H1 (cell line): ENCODE measurements at regions of chr9 and their contacts with region 1.

Region 1: GRCh38 chr9:97900738-97901565 is 21.3 kb downstream of the TRMO start:
- DNase-seq: no peak
- H3K4me3 ChIP-seq: no peak overlapping the region
- H3K27ac ChIP-seq: no peak overlapping the region
- H3K4me1 ChIP-seq: no peaks in the 10 kb centered on the region
- H3K27me3 ChIP-seq: no peaks in the 10 kb centered on the region
- CTCF ChIP-seq: peak in 2 of 3 experiments; percentile 64 to 79; a peak in 3 of 4 replicates
- EP300 ChIP-seq: no peak
- POLR2A ChIP-seq: no peak
- RAD21 ChIP-seq: peak; percentile 67 to 75

Region 2: DNA sequence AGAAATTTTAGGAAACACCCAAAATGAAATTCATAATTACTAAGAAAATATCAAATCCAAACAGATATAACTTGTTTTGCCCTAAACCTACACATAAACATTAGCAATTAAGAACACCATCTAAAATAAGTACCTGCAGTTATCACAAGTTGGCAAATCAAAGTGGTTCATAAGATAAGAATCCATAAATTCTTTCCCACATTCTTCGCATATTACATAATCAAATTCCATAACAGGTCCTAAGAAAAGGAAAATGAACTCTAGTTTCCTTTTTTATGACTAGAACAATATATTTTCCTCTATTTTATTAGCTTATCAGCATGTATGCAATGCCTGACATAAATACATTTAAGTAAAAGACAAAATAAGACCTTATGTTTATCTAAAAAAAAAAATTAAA is 211.6 kb before region 1 on chr9:
- CTCF ChIA-PET with region 1: no interaction called
- POLR2A ChIA-PET with region 1: no interaction called
- DNase-seq: no peak
- H3K4me3 ChIP-seq: no peak overlapping the region
- H3K27ac ChIP-seq: no peak overlapping the region
- H3K4me1 ChIP-seq: no peaks in the 10 kb centered on the region
- H3K27me3 ChIP-seq: no peaks in the 10 kb centered on the region
- CTCF ChIP-seq: no peak
- EP300 ChIP-seq: no peak
- POLR2A ChIP-seq: no peak
- RAD21 ChIP-seq: no peak

Region 3: GRCh38 chr9:97705354-97705950 is 195.5 kb before region 1 on chr9:
- CTCF ChIA-PET with region 1: interaction called, 17 read pairs
- POLR2A ChIA-PET with region 1: no interaction called
- DNase-seq: no peak
- H3K4me3 ChIP-seq: no peak overlapping the region
- H3K27ac ChIP-seq: no peak overlapping the region
- H3K4me1 ChIP-seq: no peaks in the 10 kb centered on the region
- H3K27me3 ChIP-seq: no peaks in the 10 kb centered on the region; a peak in 1 of 7 replicates
- CTCF ChIP-seq: no peak
- EP300 ChIP-seq: no peak
- POLR2A ChIP-seq: no peak
- RAD21 ChIP-seq: no peak

Region 4: DNA sequence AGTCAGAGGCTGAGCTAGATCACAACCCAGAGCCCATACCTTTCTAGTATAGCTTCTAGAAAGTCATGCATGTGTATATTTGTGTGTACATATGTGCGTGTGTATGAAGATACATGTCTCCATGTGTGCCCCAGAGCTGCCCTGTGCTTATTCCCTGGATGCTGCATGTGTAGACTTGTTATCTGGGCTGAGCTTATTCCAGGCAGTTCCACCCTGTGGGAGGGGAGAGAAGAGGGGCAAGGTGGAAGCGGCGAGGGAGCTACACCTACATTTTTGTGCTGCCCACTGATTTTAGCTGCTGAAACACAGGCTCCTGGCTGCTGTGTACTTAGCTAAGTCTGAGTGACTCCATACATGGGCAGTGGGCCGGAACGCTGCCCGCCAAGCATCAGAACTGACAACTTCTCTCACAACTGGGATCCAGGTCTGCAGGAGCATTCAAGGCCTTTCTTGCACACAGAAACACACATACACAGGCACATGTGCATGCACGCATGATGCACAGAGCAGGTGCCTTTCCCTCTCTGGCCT is 165.8 kb before region 1 on chr9:
- CTCF ChIA-PET with region 1: interaction called, 14 read pairs
- POLR2A ChIA-PET with region 1: no interaction called
- DNase-seq: no peak
- H3K4me3 ChIP-seq: no peak overlapping the region
- H3K27ac ChIP-seq: no peak overlapping the region
- H3K4me1 ChIP-seq: no peaks in the 10 kb centered on the region
- H3K27me3 ChIP-seq: peaks cover 0 to 6% (median 5%) of the 10 kb centered on the region in 4 experiments; a peak in 5 of 7 replicates
- CTCF ChIP-seq: no peak
- EP300 ChIP-seq: no peak
- POLR2A ChIP-seq: no peak
- RAD21 ChIP-seq: no peak

Region 5: DNA sequence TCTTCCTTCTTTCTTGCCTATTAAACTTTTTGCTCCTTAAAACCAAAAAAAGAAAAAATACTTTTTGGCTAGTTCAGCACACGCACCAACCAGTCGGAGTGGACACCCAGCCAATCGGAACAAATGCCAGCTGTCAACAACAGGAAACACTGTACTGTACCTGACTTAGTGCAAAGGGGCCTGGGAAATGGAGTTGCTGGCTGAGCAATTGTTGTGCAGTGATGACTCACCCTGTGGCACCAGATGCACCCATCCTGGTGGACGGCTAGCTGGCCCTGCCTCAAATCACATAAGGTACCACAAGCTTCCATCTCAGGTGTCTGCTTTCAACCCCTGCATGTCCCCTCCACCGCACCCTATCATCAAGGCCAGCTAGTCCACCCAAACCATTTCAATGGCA is 27.1 kb before region 1 on chr9:
- CTCF ChIA-PET with region 1: interaction called, 10 read pairs
- POLR2A ChIA-PET with region 1: no interaction called
- DNase-seq: peak in 1 of 2 experiments; percentile 35
- H3K4me3 ChIP-seq: no peak overlapping the region
- H3K27ac ChIP-seq: no peak overlapping the region
- H3K4me1 ChIP-seq: peaks cover 1 to 9% (median 5%) of the 10 kb centered on the region in 4 experiments; a peak in 4 of 7 replicates
- H3K27me3 ChIP-seq: no peaks in the 10 kb centered on the region; a peak in 2 of 7 replicates
- CTCF ChIP-seq: no peak
- EP300 ChIP-seq: no peak
- POLR2A ChIP-seq: no peak
- RAD21 ChIP-seq: no peak

Region 6: DNA sequence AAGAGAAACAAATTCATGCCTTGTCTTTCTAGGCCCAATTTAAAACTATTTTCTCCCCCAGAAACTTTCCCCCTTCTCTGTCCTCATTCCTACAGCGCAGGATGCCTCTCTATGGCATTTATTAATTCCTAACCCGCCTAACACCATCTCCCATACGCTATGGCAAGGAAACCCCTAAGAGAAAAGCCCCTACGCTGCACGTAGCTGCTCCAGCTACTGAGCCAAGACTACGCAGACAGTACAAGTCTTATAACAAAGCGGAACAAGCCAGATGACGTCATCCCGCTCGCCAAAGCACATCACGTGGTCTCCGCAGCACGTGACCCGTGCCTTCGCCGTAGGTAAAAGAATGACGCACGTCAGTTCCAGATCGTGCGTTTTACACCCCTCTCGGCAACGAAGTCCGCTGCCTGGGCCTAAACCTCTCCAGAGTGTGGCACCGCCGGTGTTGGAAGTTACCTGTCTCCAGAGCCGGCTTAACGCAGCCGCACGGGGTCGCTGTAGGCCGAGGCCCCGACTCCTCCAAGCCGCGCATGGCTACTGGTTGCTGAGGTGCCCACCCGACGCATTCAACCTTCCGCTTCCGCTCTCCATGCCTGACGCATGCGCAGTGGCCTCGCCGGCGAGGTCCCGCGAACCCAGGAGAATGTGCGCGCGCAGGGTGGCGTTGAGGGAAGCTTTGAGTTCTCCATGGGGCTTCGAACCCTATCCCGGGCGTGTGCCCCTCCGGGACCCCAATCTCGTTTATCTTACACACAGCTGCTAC is 21.2 kb after region 1 on chr9 and contains the start of gene TRMO:
- CTCF ChIA-PET with region 1: interaction called, 15 read pairs
- POLR2A ChIA-PET with region 1: interaction called, 5 read pairs
- DNase-seq: peak; percentile 92 to 98
- H3K4me3 ChIP-seq: peak within 1 kb of the TSS; percentile 48 to 68 (median 54)
- H3K27ac ChIP-seq: peak within 1 kb of the TSS; percentile 66
- H3K4me1 ChIP-seq: no peaks in the 10 kb centered on the region; a peak in 1 of 7 replicates
- H3K27me3 ChIP-seq: no peaks in the 10 kb centered on the region; a peak in 2 of 7 replicates
- CTCF ChIP-seq: peak; percentile 57 to 76 (median 62)
- EP300 ChIP-seq: peak in 1 of 2 experiments; percentile 62; a peak in 1 of 3 replicates
- POLR2A ChIP-seq: peak; percentile 87 to 90
- RAD21 ChIP-seq: peak; percentile 40 to 48
- total RNA-seq, gene TRMO: 4.7 and 5.6 TPM in 2 replicates

Region 7: DNA sequence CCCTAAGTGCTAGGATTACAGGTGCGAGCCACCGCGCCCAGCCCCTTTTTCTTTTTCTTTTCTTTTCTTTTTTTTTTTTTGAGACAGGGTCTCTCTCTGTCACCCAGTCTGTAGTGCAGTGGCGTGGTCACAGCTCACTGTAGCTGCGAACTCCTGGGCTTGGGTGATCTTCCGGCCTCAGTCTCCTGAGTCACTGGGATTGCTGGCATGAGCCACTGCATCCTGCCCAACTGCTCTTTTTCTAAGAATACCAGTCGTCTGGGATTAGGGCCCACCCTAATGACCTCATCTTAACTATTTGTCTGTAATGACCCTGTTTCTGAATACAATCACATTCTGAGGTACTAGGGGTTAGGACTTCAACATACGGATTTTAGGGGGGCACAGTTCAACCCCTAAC is 121.5 kb after region 1 on chr9:
- CTCF ChIA-PET with region 1: no interaction called
- POLR2A ChIA-PET with region 1: no interaction called
- DNase-seq: no peak
- H3K4me3 ChIP-seq: no peak overlapping the region
- H3K27ac ChIP-seq: no peak overlapping the region
- H3K4me1 ChIP-seq: no peaks in the 10 kb centered on the region
- H3K27me3 ChIP-seq: no peaks in the 10 kb centered on the region
- CTCF ChIP-seq: no peak
- EP300 ChIP-seq: no peak
- POLR2A ChIP-seq: no peak
- RAD21 ChIP-seq: no peak

Region 8: DNA sequence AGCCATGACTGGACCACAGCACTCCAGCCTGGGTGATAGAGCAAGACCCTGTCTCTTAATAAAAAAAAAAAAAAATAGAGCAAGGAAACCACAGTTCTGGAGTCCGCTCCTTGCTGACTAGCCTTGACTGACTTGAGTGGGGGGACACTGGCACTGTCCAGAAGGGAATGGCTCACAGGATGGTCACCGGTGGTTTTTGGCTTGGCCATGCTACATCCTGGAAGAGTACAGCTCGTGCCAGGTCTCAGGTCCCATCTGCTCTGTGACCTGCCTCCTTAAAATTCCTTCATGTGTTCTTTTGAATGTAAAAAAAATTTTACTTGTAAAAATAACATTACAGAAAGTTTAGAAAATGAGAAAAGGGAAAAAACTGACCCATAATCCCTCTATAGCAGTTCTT is 161.2 kb after region 1 on chr9:
- CTCF ChIA-PET with region 1: no interaction called
- POLR2A ChIA-PET with region 1: no interaction called
- DNase-seq: no peak
- H3K4me3 ChIP-seq: no peak overlapping the region
- H3K27ac ChIP-seq: no peak overlapping the region
- H3K4me1 ChIP-seq: peaks cover 0 to 4% (median 2%) of the 10 kb centered on the region in 4 experiments; a peak in 1 of 7 replicates
- H3K27me3 ChIP-seq: no peaks in the 10 kb centered on the region; a peak in 1 of 7 replicates
- CTCF ChIP-seq: no peak
- EP300 ChIP-seq: no peak
- POLR2A ChIP-seq: no peak
- RAD21 ChIP-seq: no peak